Ovary (tissue), 10 donors: ENCODE measurements at regions of chr3 and their contacts with region 1.

Region 1: DNA sequence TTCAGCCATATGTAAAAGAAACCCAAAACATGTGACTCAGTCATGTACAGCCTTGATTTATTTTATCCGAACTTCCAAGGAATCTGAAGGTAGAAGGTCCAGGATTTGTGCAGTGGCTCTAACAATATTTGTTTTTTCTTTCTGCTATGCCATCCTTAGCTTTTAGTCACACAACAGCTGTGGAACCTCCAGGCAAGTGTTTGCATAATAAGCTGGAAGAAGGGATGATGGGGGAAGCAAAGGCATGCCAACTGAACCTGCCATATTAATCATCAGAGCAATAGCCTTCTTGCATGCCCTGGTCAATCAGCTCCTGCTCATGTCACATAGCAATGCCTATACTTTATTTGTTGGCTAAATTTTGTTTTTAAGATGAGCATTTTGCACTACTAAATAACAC is 444.7 kb upstream of the ARPP21 start:
- DNase-seq: no peak
- H3K4me3 ChIP-seq: no peak overlapping the region
- H3K27ac ChIP-seq: no peak overlapping the region
- H3K4me1 ChIP-seq: no peaks in the 10 kb centered on the region
- H3K27me3 ChIP-seq: no peaks in the 10 kb centered on the region
- CTCF ChIP-seq: no peak
- EP300 ChIP-seq: no peak
- POLR2A ChIP-seq: no peak

Region 2: DNA sequence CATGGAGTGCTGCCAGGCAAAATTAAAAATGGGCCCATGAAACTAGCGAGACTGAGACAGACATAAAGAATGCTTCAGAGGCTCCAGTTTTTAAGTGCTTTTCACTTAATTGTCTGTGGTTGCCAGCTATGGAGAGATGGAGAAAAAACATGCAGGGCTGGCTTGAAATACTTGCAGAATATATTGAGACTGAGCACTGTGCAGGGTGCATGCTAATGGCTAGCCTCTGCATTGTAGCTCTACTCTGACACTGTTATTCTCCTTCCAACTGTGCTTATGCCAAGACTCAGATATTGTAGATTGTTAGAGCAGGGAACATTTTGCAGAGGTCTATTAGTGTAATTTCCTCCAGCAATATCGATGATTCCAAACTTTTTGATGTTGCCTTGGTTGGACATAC is 661.2 kb before region 1 on chr3:
- intact Hi-C with region 1: loop called in 1 of 4 experiments (anchors 10 kb)
- DNase-seq: no peak
- H3K4me3 ChIP-seq: no peak overlapping the region
- H3K27ac ChIP-seq: no peak overlapping the region
- H3K4me1 ChIP-seq: no peaks in the 10 kb centered on the region
- H3K27me3 ChIP-seq: no peaks in the 10 kb centered on the region
- CTCF ChIP-seq: no peak
- EP300 ChIP-seq: no peak
- POLR2A ChIP-seq: no peak

Region 3: DNA sequence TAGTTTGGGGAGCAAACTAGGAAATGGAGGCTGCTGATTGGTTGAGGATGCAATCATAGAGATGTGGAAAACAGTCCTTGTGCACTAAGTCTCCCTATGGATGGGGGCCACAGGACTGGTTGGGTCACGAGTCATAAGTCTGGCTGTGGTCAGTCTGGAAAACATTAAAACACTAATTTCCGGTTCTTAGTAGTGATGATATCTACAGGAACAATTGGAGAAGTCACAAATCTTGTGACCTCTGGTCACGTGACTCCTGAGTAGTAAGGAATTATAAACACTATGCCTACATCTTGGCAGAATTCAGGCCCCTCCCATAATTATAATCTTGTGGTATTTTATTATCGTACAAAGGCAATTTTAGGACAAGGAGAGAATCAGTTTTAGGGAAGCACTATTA is 127.4 kb after region 1 on chr3:
- intact Hi-C with region 1: no loop called
- DNase-seq: no peak
- H3K4me3 ChIP-seq: no peak overlapping the region
- H3K27ac ChIP-seq: no peak overlapping the region
- H3K4me1 ChIP-seq: no peaks in the 10 kb centered on the region
- H3K27me3 ChIP-seq: no peaks in the 10 kb centered on the region
- CTCF ChIP-seq: no peak
- EP300 ChIP-seq: no peak
- POLR2A ChIP-seq: no peak